Transverse colon (tissue), 4 donors: ENCODE measurements at regions of chr5 and their contacts with region 1.

Region 1: DNA sequence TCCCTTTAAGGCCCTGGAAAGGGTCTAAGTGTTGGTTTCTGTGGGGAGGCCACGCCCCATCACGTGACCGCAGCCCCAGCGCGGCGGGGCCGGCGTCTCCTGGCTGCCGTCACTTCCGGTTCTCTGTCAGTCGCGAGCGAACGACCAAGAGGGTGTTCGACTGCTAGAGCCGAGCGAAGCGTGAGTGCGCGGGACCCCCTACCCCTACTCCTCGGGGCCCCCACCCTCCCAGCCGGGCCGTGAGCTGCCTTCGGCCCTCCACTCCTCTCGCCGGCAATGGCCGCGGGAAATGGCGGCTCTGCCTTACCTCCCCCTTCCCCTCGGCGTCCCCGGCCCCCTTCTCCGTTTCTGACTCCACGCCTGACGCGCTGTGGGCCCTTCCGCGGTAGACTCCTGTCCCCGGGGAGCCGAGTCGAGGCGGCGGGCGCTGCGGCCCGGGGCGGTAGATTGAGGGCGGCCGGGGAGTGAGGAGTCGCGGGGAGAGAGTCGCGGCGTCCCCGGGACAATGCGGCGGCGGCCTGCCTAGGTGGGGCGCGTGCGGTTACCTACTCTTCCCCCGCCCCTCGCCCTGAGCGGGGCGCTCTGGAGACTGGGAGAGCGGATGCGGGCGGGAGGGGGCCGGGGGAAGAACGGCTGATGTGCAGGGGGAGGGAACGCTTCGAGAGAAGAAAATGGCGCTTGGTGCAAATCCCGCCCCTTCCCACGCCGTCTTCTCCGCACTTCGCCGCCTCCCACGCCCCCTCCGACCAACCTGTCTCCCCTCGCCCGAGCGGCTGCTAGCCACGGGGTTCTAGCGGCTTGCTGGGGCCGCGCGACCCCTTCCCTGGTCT is at the start of gene SUB1:
- DNase-seq: peak; percentile 95
- H3K4me3 ChIP-seq: peak within 1 kb of the TSS; percentile 83 to 100 (median 94)
- H3K27ac ChIP-seq: peak within 1 kb of the TSS; percentile 99 to 100 (median 99)
- H3K4me1 ChIP-seq: peaks cover 9 to 40% (median 16%) of the 10 kb centered on the region in 4 donors
- H3K27me3 ChIP-seq: no peaks in the 10 kb centered on the region
- CTCF ChIP-seq: no peak
- EP300 ChIP-seq: no peak
- POLR2A ChIP-seq: peak; percentile 87
- total RNA-seq, gene SUB1: 30.3 to 126 (median 78.8) TPM

Region 2: GRCh38 chr5:32232441-32233219 is 353.0 kb before region 1 on chr5:
- in situ Hi-C with region 1: loop called in 1 of 4 experiments (anchors 25 kb)
- intact Hi-C with region 1: no loop called
- DNase-seq: peak; percentile 86
- H3K4me3 ChIP-seq: no peak overlapping the region
- H3K27ac ChIP-seq: peak overlapping the region; percentile 42 to 70 (median 53)
- H3K4me1 ChIP-seq: peaks cover 4 to 32% (median 18%) of the 10 kb centered on the region in 4 donors
- H3K27me3 ChIP-seq: no peaks in the 10 kb centered on the region
- CTCF ChIP-seq: peak; percentile 77 to 92 (median 84)
- EP300 ChIP-seq: no peak
- POLR2A ChIP-seq: no peak

Region 3: GRCh38 chr5:32489791-32490582 is 95.7 kb before region 1 on chr5:
- in situ Hi-C with region 1: loop called in 2 of 4 experiments (anchors 5 kb)
- intact Hi-C with region 1: loop called (anchors 5 kb)
- DNase-seq: peak; percentile 76
- H3K4me3 ChIP-seq: no peak overlapping the region
- H3K27ac ChIP-seq: no peak overlapping the region
- H3K4me1 ChIP-seq: peaks cover 3 to 7% (median 4%) of the 10 kb centered on the region in 4 donors
- H3K27me3 ChIP-seq: no peaks in the 10 kb centered on the region
- CTCF ChIP-seq: peak; percentile 73 to 79 (median 75)
- EP300 ChIP-seq: no peak
- POLR2A ChIP-seq: no peak

Region 4: DNA sequence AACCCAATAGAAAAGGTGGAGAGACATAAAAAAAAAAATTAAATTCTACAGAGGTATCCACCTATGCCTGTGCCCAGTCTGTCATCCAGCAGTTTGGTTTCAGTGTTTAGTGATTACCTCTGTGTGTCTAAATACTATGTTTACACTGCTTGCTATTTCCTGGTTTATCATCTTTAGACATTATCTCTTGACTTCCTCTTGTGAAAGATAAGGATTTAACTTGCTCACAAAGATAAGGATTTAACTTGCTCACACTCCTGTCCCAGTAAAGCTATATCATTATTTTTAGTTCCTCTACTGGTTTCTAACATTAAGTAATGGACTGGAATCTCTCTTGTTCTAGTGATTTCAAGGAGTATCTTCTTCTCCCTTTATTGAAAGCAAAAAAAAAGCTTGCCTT is 87.2 kb before region 1 on chr5:
- in situ Hi-C with region 1: no loop called
- intact Hi-C with region 1: loop called (anchors 5 kb)
- DNase-seq: no peak
- H3K4me3 ChIP-seq: no peak overlapping the region
- H3K27ac ChIP-seq: no peak overlapping the region
- H3K4me1 ChIP-seq: no peaks in the 10 kb centered on the region
- H3K27me3 ChIP-seq: no peaks in the 10 kb centered on the region
- CTCF ChIP-seq: no peak
- EP300 ChIP-seq: no peak
- POLR2A ChIP-seq: no peak